ENCODE measurements at regions of chr6 and their contacts with region 1.

Region 1: DNA sequence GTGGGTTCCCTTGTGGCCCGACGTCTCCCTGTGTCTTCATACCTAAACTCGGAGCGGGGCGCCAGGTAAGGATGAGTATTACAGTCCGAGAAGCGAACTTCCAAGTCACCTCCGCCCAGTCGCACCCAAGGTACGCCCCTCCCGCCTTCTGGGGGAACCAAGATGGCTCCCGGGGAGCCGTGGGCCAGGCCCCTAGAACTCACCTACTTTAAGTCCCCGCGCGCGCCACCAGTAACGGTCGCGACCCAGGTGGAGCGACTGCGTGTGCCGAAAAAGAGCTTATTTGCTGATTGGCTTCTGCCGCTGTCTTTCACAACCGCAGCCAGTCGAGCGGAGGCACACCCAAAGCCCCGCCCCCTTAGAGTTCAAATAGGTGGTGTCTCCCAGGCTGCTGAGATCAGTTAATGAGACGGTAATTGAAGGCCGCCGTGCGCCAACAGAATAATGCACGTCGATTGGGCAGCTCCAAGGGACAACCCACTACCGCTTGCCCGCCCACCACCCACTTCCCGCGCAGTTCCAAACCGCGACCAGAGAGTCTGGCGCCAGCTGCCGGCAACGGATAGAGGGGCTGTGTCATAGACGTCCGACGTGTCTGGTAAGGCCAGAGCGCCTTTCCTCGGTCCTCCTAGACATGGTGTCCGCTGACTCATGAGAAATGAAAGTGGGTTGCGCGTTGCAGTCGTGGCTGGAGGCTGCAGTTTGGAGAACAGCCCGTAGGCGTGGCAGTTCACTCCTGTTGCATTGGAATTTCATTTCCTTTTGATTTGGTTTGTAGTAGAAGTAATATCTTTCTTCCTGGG is at the start of gene MDC1:
- DNase-seq: peak; percentile 100
- ATAC-seq: peak; percentile 81
- H3K4me3 Mint-ChIP-seq: peak within 1 kb of the TSS; percentile 98
- H3K27ac Mint-ChIP-seq: peak within 1 kb of the TSS; percentile 100
- H3K4me1 Mint-ChIP-seq: peaks cover 64% of the 10 kb centered on the region
- H3K27me3 Mint-ChIP-seq: no peaks in the 10 kb centered on the region
- total RNA-seq, gene MDC1: 48.5 to 52.4 TPM

Region 2: GRCh38 chr6:30672445-30673253 is 44.6 kb before region 1 on chr6 and contains the start of gene DHX16:
- CTCF ChIA-PET with region 1: interaction called, 686 read pairs
- POLR2A ChIA-PET with region 1: interaction called, 10 read pairs
- DNase-seq: peak; percentile 95
- ATAC-seq: peak; percentile 86
- H3K4me3 Mint-ChIP-seq: peak within 1 kb of the TSS; percentile 93
- H3K27ac Mint-ChIP-seq: peak within 1 kb of the TSS; percentile 78
- H3K4me1 Mint-ChIP-seq: peaks cover 39% of the 10 kb centered on the region
- H3K27me3 Mint-ChIP-seq: no peaks in the 10 kb centered on the region
- total RNA-seq, gene DHX16: 38.5 to 41.0 TPM

Region 3: DNA sequence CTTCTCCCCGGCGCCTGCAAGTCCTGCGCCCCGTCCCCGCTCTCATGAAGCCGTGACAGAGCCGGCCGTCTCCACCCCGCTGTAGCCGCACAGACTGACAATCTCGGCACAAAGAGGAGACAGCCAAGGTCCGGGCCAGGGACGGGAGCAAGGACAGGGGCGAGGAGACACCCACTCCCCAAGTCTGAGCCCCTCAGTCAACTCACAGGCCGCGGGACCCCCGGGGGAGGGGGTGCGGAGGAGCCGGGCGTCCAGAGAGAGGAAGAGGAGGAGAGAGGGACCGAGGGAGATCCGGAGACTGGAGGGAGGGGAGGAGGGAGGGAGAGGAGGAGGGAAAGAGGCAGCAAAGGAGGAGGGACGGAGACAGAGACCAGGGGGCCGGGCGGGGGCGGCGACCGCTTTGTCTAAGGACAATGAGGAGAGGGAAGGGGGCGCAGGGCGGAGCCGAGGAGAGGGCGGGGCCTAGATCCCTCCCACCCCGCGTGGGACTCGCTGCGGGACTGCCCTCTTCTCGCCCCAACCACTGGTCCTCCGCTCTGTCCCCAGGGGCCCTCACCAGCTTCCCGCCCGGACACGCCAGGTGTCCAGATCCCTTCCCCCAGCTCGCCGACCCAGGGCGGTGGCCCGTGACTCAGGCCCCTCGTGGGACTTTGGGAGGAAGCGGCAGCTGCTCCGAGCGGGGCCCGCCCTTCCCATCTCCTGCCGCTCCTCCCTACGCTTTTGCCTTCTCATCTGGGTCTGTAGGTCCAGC is 30.2 kb before region 1 on chr6:
- CTCF ChIA-PET with region 1: interaction called, 686 read pairs
- POLR2A ChIA-PET with region 1: interaction called, 343 read pairs
- DNase-seq: peak; percentile 91
- ATAC-seq: peak; percentile 43
- H3K4me3 Mint-ChIP-seq: peak overlapping the region; percentile 93
- H3K27ac Mint-ChIP-seq: peak overlapping the region; percentile 98
- H3K4me1 Mint-ChIP-seq: peaks cover 40% of the 10 kb centered on the region
- H3K27me3 Mint-ChIP-seq: no peaks in the 10 kb centered on the region